Activated CD4-positive, alpha-beta T cell treated with anti-CD3 and anti-CD28 coated beads, Interleukin-2, amount 10 ng/mL, durations not matched to agents 24 days and 14 days (primary cell): ENCODE measurements at regions of chrX and their contacts with region 1.

Region 1: DNA sequence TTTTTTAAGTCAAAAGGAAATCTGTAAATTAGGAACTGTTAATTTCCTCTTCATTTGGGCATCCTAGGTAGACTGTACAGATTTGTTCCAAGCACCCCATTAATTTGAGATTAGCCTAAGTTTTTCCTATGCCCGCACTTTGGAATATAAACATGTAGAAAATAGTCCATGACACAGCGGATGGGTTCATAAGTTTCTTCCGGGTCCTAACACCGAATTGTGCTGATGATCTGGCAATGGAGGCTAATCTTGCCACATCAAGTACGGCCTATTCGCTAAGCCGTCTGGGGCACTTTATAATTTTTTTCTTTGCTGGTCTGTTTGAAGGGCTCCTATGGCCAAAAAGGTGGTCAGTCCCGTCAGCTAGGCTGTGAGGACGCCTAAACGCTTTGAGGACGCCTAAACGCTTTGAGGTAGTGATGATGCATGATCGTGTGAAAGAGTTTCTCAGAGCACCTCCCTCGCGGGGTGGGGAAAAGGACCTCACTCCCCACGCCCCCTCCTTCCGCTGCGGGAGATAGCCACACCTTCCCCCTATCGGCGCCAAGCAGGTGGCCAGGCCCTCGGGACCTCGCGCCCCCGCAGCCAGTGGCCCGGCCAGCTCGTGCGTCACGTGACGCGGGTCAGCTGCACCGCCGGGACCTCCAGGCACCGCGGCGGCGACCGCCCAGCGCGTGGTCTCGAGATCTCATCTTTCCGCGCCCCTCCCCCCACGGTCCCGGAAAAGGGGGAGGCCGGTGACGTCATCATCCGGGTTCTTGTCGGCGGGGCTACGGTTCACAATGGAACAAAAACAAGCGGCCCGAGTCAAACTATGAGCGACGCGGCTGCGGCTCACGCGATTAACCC is 977 bp upstream of the USP9X start:
- DNase-seq: peak; percentile 97
- H3K4me3 Mint-ChIP-seq: peak overlapping the region; percentile 92
- H3K27ac Mint-ChIP-seq: peak overlapping the region; percentile 99
- H3K4me1 Mint-ChIP-seq: peaks cover 10% of the 10 kb centered on the region
- H3K27me3 Mint-ChIP-seq: peaks cover 2% of the 10 kb centered on the region

Region 2: GRCh38 chrX:40933132-40933705 is 151.0 kb before region 1 on chrX:
- intact Hi-C with region 1: loop called (anchors 1 kb)
- DNase-seq: peak; percentile 72
- H3K4me3 Mint-ChIP-seq: peak overlapping the region; percentile 79
- H3K27ac Mint-ChIP-seq: peak overlapping the region; percentile 95
- H3K4me1 Mint-ChIP-seq: peaks cover 18% of the 10 kb centered on the region
- H3K27me3 Mint-ChIP-seq: no peaks in the 10 kb centered on the region

Region 3: DNA sequence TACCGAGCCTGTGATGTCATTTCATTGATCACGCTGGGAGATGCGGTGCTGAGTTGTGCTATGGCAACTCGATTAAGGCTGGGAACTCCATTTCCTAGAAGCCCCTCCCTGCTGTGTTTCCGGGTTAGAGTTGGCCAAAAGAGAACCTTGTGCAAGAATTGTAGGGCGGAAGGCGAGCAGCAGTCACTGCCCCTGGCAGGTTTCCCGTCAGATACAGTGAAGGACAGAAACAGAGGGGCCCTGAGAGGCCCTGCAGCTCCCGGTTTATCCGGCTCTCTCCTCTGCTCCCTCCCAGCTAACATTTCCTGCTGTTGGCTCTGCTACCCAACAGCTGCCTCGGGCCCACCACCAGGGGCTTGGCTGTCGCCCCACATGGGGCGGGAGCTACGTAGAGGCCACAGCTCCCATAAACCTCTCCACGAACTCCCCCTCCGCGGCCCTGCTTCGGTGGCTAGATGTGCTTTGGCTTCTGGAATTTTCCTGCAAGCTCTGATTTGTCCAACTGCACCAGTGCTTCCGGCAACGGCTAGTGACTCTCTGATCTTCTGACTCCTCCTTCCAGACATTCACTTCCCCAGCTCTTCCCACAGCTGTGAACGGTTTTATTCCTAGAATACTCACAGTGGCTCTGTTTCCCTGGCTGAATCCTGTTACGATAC is 74.0 kb before region 1 on chrX:
- intact Hi-C with region 1: loop called (anchors 10 kb)
- DNase-seq: peak; percentile 88
- H3K4me3 Mint-ChIP-seq: peak overlapping the region; percentile 69
- H3K27ac Mint-ChIP-seq: peak overlapping the region; percentile 88
- H3K4me1 Mint-ChIP-seq: peaks cover 19% of the 10 kb centered on the region
- H3K27me3 Mint-ChIP-seq: no peaks in the 10 kb centered on the region

Region 4: DNA sequence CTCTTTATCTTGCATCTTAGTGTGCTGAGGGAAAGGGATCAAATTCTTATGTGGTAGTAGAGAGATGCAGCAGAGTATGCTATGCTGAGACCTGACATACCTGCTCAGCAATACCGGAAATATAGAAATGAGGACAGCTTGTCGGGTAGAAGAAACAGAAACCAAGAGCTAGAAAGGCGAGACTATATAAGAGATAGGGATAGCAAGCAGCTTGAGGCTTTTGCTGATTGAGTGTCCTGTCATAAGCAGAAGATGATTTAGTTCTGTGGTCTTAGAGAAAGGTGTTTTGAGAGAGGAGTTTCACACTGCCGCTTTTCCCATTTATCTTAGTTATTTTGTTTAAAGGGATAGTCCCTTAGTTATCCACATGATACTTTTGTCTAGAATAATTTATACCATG is 32.7 kb after region 1 on chrX:
- intact Hi-C with region 1: loop called (anchors 1 kb)
- DNase-seq: peak; percentile 71
- H3K4me3 Mint-ChIP-seq: peak overlapping the region; percentile 58
- H3K27ac Mint-ChIP-seq: peak overlapping the region; percentile 78
- H3K4me1 Mint-ChIP-seq: peaks cover 48% of the 10 kb centered on the region
- H3K27me3 Mint-ChIP-seq: no peaks in the 10 kb centered on the region

Region 5: DNA sequence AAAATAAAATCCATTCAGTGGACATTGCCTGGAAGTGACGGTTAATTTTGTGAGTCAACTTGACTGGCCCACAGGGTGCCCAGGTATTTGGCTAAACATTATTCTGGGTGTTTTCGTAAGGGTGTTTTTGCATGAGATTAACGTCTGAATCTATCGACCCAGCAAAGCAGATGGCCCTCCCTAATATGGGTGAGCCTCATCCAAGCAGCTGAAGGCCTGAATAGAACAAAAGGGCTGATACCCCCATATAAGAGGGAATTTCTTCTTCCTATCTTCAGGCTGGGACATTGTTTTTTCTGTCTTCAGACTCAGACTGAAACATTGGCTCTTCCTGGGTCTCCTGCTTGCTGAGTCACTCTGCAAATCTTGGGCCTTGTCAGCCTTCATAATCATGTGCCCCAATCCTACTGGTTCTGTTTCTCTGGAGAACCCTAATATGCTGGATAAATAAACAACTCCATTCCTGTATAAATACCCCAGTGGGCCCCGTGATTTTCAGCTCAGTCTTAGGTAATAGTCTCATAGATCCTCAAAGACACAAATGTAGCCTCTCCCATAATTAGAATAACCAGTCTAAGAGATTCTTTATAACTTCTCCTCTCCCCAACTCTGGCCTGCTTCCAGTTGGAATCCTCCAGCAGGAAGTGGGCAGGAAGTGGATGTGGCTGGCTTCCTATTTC is 216.6 kb after region 1 on chrX:
- intact Hi-C with region 1: no loop called
- DNase-seq: no peak
- H3K4me3 Mint-ChIP-seq: no peak overlapping the region
- H3K27ac Mint-ChIP-seq: no peak overlapping the region
- H3K4me1 Mint-ChIP-seq: peaks cover 3% of the 10 kb centered on the region
- H3K27me3 Mint-ChIP-seq: no peaks in the 10 kb centered on the region

Region 6: GRCh38 chrX:41333744-41334259 is 249.5 kb after region 1 on chrX and contains the start of gene DDX3X:
- intact Hi-C with region 1: loop called (anchors 1 kb)
- DNase-seq: peak; percentile 95
- H3K4me3 Mint-ChIP-seq: peak within 1 kb of the TSS; percentile 98
- H3K27ac Mint-ChIP-seq: peak within 1 kb of the TSS; percentile 100
- H3K4me1 Mint-ChIP-seq: peaks cover 25% of the 10 kb centered on the region
- H3K27me3 Mint-ChIP-seq: no peaks in the 10 kb centered on the region
- total RNA-seq, gene DDX3X: 307 and 313 TPM in 2 replicates